Heart left ventricle (tissue), 16 donors: ENCODE measurements at regions of chr1 and their contacts with region 1.

Region 1: DNA sequence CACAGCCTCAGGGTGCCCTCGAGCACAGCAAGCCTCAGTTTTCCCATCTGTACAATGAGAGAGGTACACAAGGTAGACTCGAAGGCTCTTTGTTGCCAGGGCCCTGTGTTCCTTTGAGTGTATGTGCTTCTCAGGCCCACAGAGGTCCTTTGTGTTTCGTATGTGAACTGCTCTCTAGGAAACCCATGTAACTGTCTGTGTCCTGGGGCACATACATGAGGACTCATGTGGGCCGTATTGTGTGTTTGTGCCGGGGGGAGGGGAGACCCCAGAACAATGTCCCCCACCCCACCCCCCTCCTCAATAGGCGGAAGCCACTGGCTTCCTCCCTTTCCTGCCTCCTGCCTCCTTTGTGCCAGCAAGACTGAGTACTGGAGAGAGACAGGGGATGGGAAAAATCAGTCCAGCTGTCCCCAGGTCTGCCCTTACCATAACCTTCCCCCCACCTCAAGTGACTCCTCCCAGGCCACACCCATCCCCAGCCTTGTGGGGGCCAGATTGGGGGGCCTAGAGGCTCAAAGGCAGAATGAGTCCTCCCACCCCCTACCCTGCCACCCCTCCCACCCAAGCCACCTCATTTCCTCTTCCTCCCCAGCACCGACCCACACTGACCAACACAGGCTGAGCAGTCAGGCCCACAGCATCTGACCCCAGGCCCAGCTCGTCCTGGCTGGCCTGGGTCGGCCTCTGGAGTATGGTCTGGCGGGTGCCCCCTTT is at the start of gene TIE1:
- DNase-seq: peak in 4 of 5 donors; percentile 46 to 76 (median 72)
- ATAC-seq: peak; percentile 60 to 89 (median 68)
- H3K4me3 ChIP-seq: peak within 1 kb of the TSS; percentile 27 to 66 (median 52)
- H3K27ac ChIP-seq: peak within 1 kb of the TSS; percentile 66 to 93 (median 80)
- H3K4me1 ChIP-seq: peaks cover 0 to 54% (median 37%) of the 10 kb centered on the region in 12 donors
- H3K27me3 ChIP-seq: no peaks in the 10 kb centered on the region
- CTCF ChIP-seq: no peak
- POLR2A ChIP-seq: peak in 1 of 2 donors; percentile 57
- total RNA-seq, gene TIE1: 19.2 to 65.1 (median 28.4) TPM

Region 2: DNA sequence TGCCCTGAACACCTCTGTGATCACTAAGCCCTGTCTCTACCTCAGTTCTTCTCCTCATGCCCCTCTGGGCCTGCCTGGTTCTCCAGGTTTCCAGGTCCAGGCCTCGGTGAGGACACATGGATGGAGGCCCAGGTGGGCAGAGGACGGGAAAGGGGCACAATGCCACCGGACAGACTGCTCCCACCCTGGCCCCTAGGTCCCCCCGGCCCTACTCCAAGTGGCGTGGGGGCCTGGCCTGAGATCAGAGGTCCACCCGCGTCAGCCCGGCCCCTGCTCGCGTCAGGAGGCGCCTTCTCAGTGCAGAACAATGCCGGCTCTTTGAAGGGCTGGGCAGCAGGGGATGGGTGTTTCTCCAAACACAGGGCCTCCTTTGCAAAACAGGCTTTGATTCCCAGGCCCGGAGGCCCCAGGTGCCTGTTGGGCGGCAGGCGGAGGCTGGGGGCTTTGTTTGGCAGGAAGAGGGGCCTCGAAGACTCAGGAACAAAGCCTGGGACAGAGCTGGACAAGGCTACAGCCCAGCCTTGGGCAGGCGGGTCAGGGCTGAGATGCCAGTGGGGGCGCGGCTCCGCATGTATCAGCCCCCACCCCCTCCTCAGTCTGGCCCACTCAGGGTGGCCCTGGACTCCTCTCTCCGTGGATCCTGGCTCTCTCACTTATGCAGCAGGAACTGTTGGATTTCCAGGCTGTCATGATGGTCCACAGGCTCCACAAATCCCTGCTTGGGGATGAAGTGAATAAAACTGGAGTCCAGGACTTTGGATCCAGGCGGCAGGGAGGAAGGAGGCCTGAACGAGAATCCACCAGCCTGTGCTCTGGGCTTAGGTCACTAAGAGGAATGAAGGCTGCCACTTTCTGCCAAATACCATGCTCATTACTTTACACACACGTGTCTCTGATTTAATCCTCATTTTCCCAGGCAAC is 264.5 kb before region 1 on chr1:
- intact Hi-C with region 1: no loop called
- DNase-seq: no peak
- ATAC-seq: no peak
- H3K4me3 ChIP-seq: no peak overlapping the region
- H3K27ac ChIP-seq: no peak overlapping the region
- H3K4me1 ChIP-seq: peaks cover 0 to 9% (median 0%) of the 10 kb centered on the region in 12 donors
- H3K27me3 ChIP-seq: no peaks in the 10 kb centered on the region
- CTCF ChIP-seq: no peak
- POLR2A ChIP-seq: no peak

Region 3: GRCh38 chr1:43348809-43349583 is 48.5 kb after region 1 on chr1:
- intact Hi-C with region 1: loop called in 3 of 10 experiments (anchors 2 to 5 kb)
- DNase-seq: peak; percentile 85 to 90 (median 90)
- ATAC-seq: peak; percentile 86 to 92 (median 89)
- H3K4me3 ChIP-seq: peak overlapping the region; percentile 34 to 90 (median 60)
- H3K27ac ChIP-seq: peak overlapping the region; percentile 78 to 100 (median 96)
- H3K4me1 ChIP-seq: peaks cover 0 to 54% (median 25%) of the 10 kb centered on the region in 12 donors
- H3K27me3 ChIP-seq: no peaks in the 10 kb centered on the region
- CTCF ChIP-seq: no peak
- POLR2A ChIP-seq: peak in 1 of 2 donors; percentile 46

Region 4: GRCh38 chr1:43367904-43368645 is 67.5 kb after region 1 on chr1 and contains the start of gene ELOVL1:
- intact Hi-C with region 1: loop called in 1 of 10 experiments (anchors 5 kb)
- DNase-seq: peak; percentile 95 to 97 (median 95)
- ATAC-seq: peak; percentile 86 to 97 (median 94)
- H3K4me3 ChIP-seq: peak within 1 kb of the TSS; percentile 54 to 97 (median 90)
- H3K27ac ChIP-seq: peak within 1 kb of the TSS; percentile 91 to 99 (median 97)
- H3K4me1 ChIP-seq: peaks cover under 1 to 38% (median 28%) of the 10 kb centered on the region in 12 donors
- H3K27me3 ChIP-seq: no peaks in the 10 kb centered on the region
- CTCF ChIP-seq: peak in 5 of 12 donors; percentile 18 to 62 (median 39)
- POLR2A ChIP-seq: peak in 1 of 2 donors; percentile 93
- total RNA-seq, gene ELOVL1: 22.1 to 63.5 (median 33.6) TPM